Endothelial cell of umbilical vein (primary cell): ENCODE measurements at regions of chr11 and their contacts with region 1.

Region 1: GRCh38 chr11:61627567-61628445 is 46.9 kb upstream of the SYT7 start:
- DNase-seq: peak; percentile 55
- H3K4me3 ChIP-seq: no peak overlapping the region
- H3K27ac ChIP-seq: no peak overlapping the region
- H3K4me1 ChIP-seq: no peaks in the 10 kb centered on the region
- H3K27me3 ChIP-seq: no peaks in the 10 kb centered on the region
- CTCF ChIP-seq: peak; percentile 82 to 92
- POLR2A ChIP-seq: no peak

Region 2: GRCh38 chr11:61477727-61478148 is 150.1 kb before region 1 on chr11:
- CTCF ChIA-PET with region 1: interaction called, 11 read pairs
- POLR2A ChIA-PET with region 1: no interaction called
- dilution Hi-C with region 1: no loop called
- intact Hi-C with region 1: loop called (anchors 1 kb)
- DNase-seq: peak; percentile 39
- H3K4me3 ChIP-seq: no peak overlapping the region
- H3K27ac ChIP-seq: no peak overlapping the region
- H3K4me1 ChIP-seq: no peaks in the 10 kb centered on the region
- H3K27me3 ChIP-seq: no peaks in the 10 kb centered on the region
- CTCF ChIP-seq: peak; percentile 80 to 89
- POLR2A ChIP-seq: no peak

Region 3: DNA sequence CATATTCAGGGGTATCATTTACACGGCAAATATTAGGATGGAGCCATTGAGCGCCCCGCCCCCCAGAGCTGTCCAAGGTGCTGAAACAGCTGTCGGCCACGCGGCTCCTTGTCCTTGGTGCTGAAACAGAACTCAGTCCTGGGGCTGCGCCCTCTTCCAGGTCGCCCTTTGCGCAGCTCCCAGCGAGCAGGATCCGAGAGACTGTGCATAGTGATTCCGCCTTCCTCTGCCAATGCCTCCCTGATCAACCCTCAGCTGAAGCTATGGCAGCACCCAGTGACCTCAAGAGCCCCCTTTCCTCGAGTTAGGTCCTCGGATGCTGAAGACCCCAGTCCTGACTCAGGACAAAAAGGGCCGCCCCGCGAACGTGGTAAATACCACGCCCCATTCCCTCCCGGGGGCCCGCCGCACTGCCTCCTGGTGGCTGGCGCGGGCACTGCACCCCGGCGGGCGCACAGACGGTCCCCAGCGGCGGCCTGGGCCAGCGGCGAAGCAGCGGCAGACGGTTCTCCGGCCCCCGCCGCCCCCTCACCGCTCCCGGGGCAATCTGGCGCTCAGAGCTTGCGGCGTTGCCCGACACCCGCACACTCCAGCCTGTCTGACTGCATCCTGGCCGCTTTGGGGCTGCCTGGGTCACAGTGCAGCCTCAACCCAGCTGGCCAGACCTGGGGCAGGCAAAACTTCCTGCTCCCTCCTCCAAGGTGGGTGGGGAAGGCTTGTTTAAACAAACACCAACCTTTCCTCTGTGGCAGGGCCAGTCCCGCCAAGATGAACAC is 60.3 kb before region 1 on chr11:
- CTCF ChIA-PET with region 1: no interaction called
- POLR2A ChIA-PET with region 1: no interaction called
- dilution Hi-C with region 1: no loop called
- intact Hi-C with region 1: loop called (anchors 5 kb)
- DNase-seq: peak; percentile 69
- H3K4me3 ChIP-seq: no peak overlapping the region
- H3K27ac ChIP-seq: no peak overlapping the region
- H3K4me1 ChIP-seq: no peaks in the 10 kb centered on the region
- H3K27me3 ChIP-seq: peaks cover 0 to 3% of the 10 kb centered on the region in 2 experiments
- CTCF ChIP-seq: peak; percentile 50 to 74
- POLR2A ChIP-seq: no peak

Region 4: GRCh38 chr11:61587521-61588453 is 40.0 kb before region 1 on chr11:
- CTCF ChIA-PET with region 1: interaction called, 10 read pairs
- POLR2A ChIA-PET with region 1: no interaction called
- dilution Hi-C with region 1: no loop called
- intact Hi-C with region 1: no loop called
- DNase-seq: peak; percentile 22
- H3K4me3 ChIP-seq: peak overlapping the region in 1 of 3 experiments; percentile 7
- H3K27ac ChIP-seq: no peak overlapping the region
- H3K4me1 ChIP-seq: no peaks in the 10 kb centered on the region
- H3K27me3 ChIP-seq: peaks cover 15 to 31% of the 10 kb centered on the region in 2 experiments
- CTCF ChIP-seq: peak in 1 of 2 donors; percentile 27
- POLR2A ChIP-seq: no peak

Region 5: DNA sequence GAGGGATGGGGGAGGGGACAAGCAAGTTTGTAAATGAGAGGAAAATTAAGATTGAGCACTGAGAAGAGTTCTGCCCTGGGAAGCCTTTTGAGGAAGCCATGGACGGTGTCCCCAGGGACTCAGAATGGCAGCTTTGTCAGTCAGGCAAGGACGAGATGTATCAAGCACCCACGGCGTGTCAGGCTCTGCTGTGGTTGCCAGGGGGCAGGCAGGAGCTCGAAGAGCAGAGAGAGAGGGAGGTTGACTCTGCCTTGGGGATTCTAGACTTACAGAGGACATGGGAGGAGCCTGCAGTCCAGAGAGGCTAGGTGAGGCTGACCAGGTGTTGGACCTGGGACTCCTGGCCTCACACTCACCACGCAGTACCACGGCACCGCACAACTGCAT is 17.8 kb before region 1 on chr11:
- CTCF ChIA-PET with region 1: no interaction called
- POLR2A ChIA-PET with region 1: no interaction called
- dilution Hi-C with region 1: no loop called
- intact Hi-C with region 1: no loop called
- DNase-seq: no peak
- H3K4me3 ChIP-seq: no peak overlapping the region
- H3K27ac ChIP-seq: no peak overlapping the region
- H3K4me1 ChIP-seq: no peaks in the 10 kb centered on the region
- H3K27me3 ChIP-seq: peaks cover 0 to 7% of the 10 kb centered on the region in 2 experiments
- CTCF ChIP-seq: no peak
- POLR2A ChIP-seq: no peak

Region 6: GRCh38 chr11:61787928-61788491 is 160.2 kb after region 1 on chr11:
- CTCF ChIA-PET with region 1: no interaction called
- POLR2A ChIA-PET with region 1: no interaction called
- dilution Hi-C with region 1: no loop called
- intact Hi-C with region 1: no loop called
- DNase-seq: peak; percentile 43
- H3K4me3 ChIP-seq: no peak overlapping the region
- H3K27ac ChIP-seq: no peak overlapping the region
- H3K4me1 ChIP-seq: peaks cover 6% of the 10 kb centered on the region
- H3K27me3 ChIP-seq: no peaks in the 10 kb centered on the region
- CTCF ChIP-seq: peak; percentile 51 to 55
- POLR2A ChIP-seq: no peak